Natural killer cell (primary cell): ENCODE measurements at regions of chr9 and their contacts with region 1.

Region 1: GRCh38 chr9:134024828-134025605 is at the start of gene BRD3OS:
- DNase-seq: peak; percentile 78 to 97
- ATAC-seq: peak; percentile 90 to 99 (median 93)
- H3K4me3 ChIP-seq: peak within 1 kb of the TSS; percentile 59
- H3K4me3 Mint-ChIP-seq: peak within 1 kb of the TSS; percentile 83
- H3K27ac ChIP-seq: peak within 1 kb of the TSS; percentile 28
- H3K27ac Mint-ChIP-seq: peak within 1 kb of the TSS; percentile 59 to 84
- H3K4me1 ChIP-seq: peaks cover 14% of the 10 kb centered on the region
- H3K4me1 Mint-ChIP-seq: peaks cover 11 to 17% of the 10 kb centered on the region in 2 donors
- H3K27me3 ChIP-seq: no peaks in the 10 kb centered on the region
- H3K27me3 Mint-ChIP-seq: no peaks in the 10 kb centered on the region
- CTCF ChIP-seq: no peak
- total RNA-seq, gene BRD3OS: 5.5 to 6.8 (median 6.5) TPM

Region 2: GRCh38 chr9:134067904-134068743 is 43.1 kb after region 1 on chr9 and contains the start of gene BRD3:
- intact Hi-C with region 1: loop called (anchors 2 kb)
- DNase-seq: peak; percentile 80 to 95
- ATAC-seq: peak; percentile 76 to 92 (median 84)
- H3K4me3 ChIP-seq: peak within 1 kb of the TSS; percentile 64
- H3K4me3 Mint-ChIP-seq: peak within 1 kb of the TSS; percentile 94
- H3K27ac ChIP-seq: peak within 1 kb of the TSS; percentile 84
- H3K27ac Mint-ChIP-seq: peak within 1 kb of the TSS; percentile 92 to 94
- H3K4me1 ChIP-seq: peaks cover 46% of the 10 kb centered on the region
- H3K4me1 Mint-ChIP-seq: peaks cover 13 to 25% of the 10 kb centered on the region in 2 donors
- H3K27me3 ChIP-seq: peaks cover 5% of the 10 kb centered on the region
- H3K27me3 Mint-ChIP-seq: peaks cover 8 to 9% of the 10 kb centered on the region in 2 donors
- CTCF ChIP-seq: no peak
- total RNA-seq, gene BRD3: 52.8 to 63.0 (median 52.8) TPM

Region 3: DNA sequence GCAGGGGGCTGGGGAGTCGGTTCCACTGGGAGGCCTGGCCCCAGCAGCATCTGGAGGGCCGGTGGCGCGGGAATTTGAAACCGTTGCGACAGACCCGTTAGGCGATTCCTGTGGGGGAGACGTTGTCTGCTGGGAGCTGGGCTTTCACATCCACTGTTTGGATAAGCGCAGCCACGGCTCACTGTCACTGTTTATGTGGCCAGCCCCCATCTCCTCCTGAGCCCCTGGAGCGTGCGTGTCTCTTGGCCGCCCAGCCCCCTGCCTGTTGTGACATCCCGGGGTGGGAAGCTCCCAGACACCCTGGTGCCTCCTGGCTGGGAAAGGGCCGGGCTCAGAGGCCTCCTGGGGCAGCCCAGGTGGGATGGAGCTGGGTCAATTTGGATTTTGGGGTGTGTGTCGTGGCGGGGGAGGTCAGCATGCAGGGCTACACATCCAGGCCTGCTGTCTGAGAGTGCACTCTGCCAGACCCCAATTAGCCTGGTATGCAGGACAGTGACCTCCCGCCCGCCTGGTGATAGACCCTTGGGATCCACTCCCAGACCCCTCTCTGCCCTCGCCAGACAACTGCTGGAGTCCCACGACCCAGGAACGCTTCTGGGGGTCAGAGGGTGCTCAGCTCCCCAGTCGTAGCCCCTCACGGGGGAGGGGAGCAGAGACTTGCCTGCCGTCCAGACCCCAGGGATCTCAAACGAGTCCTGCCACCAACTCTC is 201.4 kb after region 1 on chr9:
- intact Hi-C with region 1: no loop called
- DNase-seq: no peak
- ATAC-seq: no peak
- H3K4me3 ChIP-seq: no peak overlapping the region
- H3K4me3 Mint-ChIP-seq: no peak overlapping the region
- H3K27ac ChIP-seq: no peak overlapping the region
- H3K27ac Mint-ChIP-seq: no peak overlapping the region
- H3K4me1 ChIP-seq: no peaks in the 10 kb centered on the region
- H3K4me1 Mint-ChIP-seq: no peaks in the 10 kb centered on the region
- H3K27me3 ChIP-seq: no peaks in the 10 kb centered on the region
- H3K27me3 Mint-ChIP-seq: peaks cover 0 to 10% of the 10 kb centered on the region in 2 donors
- CTCF ChIP-seq: no peak